ENCODE measurements at regions of chr1 and their contacts with region 1.

Region 1: GRCh38 chr1:226332947-226333346 is 24.0 kb upstream of the LIN9 start:
- DNase-seq: no peak
- ATAC-seq: no peak
- H3K4me3 ChIP-seq: no peak overlapping the region
- H3K27ac ChIP-seq: no peak overlapping the region
- H3K4me1 ChIP-seq: no peaks in the 10 kb centered on the region
- H3K27me3 ChIP-seq: no peaks in the 10 kb centered on the region

Region 2: DNA sequence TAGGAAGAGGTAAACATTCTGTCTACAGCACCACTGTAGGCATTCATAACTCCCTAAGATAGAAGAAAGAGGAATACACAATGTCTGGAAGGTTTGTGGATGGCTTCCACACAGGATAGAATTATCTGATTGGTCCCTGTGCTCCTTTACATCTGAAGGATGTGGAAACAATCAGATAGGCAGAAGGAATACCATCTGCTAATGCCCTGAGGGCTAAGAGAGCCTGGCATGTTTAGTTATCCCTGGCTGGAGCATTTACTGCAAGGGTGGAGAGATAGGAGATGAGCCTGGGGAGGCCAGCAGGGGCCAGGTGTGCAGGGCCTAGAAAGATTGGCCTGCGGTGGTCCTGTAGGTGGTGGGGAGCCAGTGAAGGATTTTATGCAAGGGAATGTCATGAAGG is 137.8 kb before region 1 on chr1:
- intact Hi-C with region 1: loop called in 1 of 2 experiments (anchors 10 kb)
- DNase-seq: no peak
- ATAC-seq: no peak
- H3K4me3 ChIP-seq: no peak overlapping the region
- H3K27ac ChIP-seq: no peak overlapping the region
- H3K4me1 ChIP-seq: no peaks in the 10 kb centered on the region
- H3K27me3 ChIP-seq: no peaks in the 10 kb centered on the region

Measured in aorta (tissue), 5 donors.